ENCODE measurements at regions of chr17 and their contacts with region 1.

Region 1: DNA sequence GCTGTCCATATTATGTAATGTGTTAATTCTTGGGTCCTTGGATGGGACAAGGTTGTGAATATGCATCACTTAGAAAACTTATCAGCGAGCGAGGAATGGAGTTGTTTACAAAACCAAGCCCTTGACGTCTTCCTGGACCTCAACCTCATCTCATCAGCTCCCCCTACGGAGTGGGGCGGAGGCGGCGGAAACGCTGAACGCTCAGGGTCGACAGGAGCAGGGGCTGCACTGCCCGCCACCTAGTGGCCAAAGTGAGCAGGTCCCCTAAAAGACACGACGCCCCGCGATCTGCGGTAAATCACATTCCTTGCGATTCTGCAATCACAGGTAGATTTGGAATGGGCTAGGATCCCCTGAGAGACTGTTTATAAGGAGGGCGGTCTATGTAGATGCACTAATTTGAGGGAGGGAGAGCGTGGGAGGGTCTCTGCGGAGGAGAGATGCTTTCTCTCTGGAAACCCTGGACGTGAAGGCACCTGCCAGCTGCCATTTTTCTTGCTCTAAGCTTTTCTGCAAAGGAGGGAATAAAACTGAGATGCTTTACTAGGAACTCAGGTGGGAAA is 5.4 kb upstream of the ICAM2 start:
- DNase-seq: peak; percentile 55
- ATAC-seq: peak; percentile 90
- H3K4me3 ChIP-seq: no peak overlapping the region; the same call in 1 of the 2 replicates
- H3K27ac ChIP-seq: 0 out of 2 replicates have a peak overlapping the region, but pooled peaks have one; percentile 7
- H3K4me1 ChIP-seq: peaks cover 11% of the 10 kb centered on the region
- H3K27me3 ChIP-seq: no peaks in the 10 kb centered on the region
- CTCF ChIP-seq: peak; percentile 94 to 100 (median 97)
- EP300 ChIP-seq: no peak
- POLR2A ChIP-seq: no peak
- RAD21 ChIP-seq: peak; percentile 75

Region 2: DNA sequence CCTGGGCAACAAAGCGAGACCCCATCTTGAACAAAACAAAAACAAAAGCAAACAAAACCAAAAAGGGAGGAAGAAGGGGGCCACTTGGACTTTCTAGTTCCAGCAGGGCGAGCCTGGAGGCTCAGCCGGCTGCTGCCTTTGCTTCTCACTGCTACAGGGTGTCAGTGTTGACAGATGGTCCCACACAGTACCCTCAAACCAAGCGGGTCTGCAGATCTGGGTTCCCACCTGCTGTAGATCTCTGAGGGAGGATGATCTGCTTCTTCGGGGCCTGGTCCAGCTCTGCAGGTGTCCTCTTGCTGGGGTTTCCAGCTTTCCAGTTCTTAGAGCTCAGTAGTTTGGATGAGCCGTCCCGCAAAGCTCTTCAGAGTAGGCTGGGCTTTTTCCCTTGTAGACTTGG is 121.5 kb before region 1 on chr17:
- CTCF ChIA-PET with region 1: interaction called, 16 read pairs
- POLR2A ChIA-PET with region 1: no interaction called
- RAD21 ChIA-PET with region 1: interaction called, 8 read pairs
- SMC1A ChIA-PET with region 1: interaction called, 11 read pairs
- in situ Hi-C with region 1: no loop called
- intact Hi-C with region 1: no loop called
- DNase-seq: no peak
- ATAC-seq: no peak
- H3K4me3 ChIP-seq: no peak overlapping the region
- H3K27ac ChIP-seq: no peak overlapping the region
- H3K4me1 ChIP-seq: no peaks in the 10 kb centered on the region
- H3K27me3 ChIP-seq: no peaks in the 10 kb centered on the region
- CTCF ChIP-seq: no peak
- EP300 ChIP-seq: no peak
- POLR2A ChIP-seq: no peak
- RAD21 ChIP-seq: no peak

Region 3: GRCh38 chr17:63931099-63931561 is 94.7 kb before region 1 on chr17:
- CTCF ChIA-PET with region 1: interaction called, 10 read pairs
- POLR2A ChIA-PET with region 1: interaction called, 33 read pairs
- RAD21 ChIA-PET with region 1: interaction called, 14 read pairs
- SMC1A ChIA-PET with region 1: interaction called, 7 read pairs
- in situ Hi-C with region 1: no loop called
- intact Hi-C with region 1: no loop called
- DNase-seq: no peak
- ATAC-seq: peak; percentile 80
- H3K4me3 ChIP-seq: peak overlapping the region; percentile 98
- H3K27ac ChIP-seq: peak overlapping the region; percentile 89
- H3K4me1 ChIP-seq: peaks cover 46% of the 10 kb centered on the region
- H3K27me3 ChIP-seq: no peaks in the 10 kb centered on the region
- CTCF ChIP-seq: no peak
- EP300 ChIP-seq: no peak
- POLR2A ChIP-seq: no peak
- RAD21 ChIP-seq: no peak

Region 4: GRCh38 chr17:64041912-64042311 is 16.1 kb after region 1 on chr17:
- CTCF ChIA-PET with region 1: interaction called, 75 read pairs
- POLR2A ChIA-PET with region 1: interaction called, 6 read pairs
- RAD21 ChIA-PET with region 1: interaction called, 4 read pairs
- SMC1A ChIA-PET with region 1: interaction called, 8 read pairs
- in situ Hi-C with region 1: no loop called
- intact Hi-C with region 1: no loop called
- DNase-seq: no peak
- ATAC-seq: no peak
- H3K4me3 ChIP-seq: no peak overlapping the region
- H3K27ac ChIP-seq: no peak overlapping the region
- H3K4me1 ChIP-seq: no peaks in the 10 kb centered on the region
- H3K27me3 ChIP-seq: no peaks in the 10 kb centered on the region
- CTCF ChIP-seq: no peak
- EP300 ChIP-seq: no peak
- POLR2A ChIP-seq: no peak
- RAD21 ChIP-seq: no peak

Region 5: DNA sequence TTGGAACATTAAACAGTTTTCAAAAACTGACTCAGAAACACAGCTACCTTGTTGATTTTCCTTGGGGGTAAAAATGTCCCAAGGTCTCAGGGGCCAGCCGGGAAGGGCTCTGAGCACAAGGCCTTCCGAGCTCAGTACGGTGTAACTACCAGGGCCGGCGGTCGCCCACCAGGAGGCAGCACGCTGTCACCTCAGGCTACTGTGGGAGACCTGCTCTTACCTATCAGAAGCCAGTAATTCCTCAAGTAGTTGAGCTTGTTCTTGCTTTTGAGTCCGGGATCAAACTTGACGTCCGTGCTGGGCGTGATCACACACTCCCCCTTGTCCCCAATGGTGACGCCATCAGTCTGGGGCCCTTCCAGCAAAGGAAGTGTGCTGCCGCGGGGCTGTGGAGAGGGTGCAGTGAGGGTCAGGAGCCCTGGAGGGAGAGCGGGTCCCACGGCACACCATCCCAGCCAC is 38.0 kb after region 1 on chr17:
- CTCF ChIA-PET with region 1: interaction called, 54 read pairs
- POLR2A ChIA-PET with region 1: no interaction called
- RAD21 ChIA-PET with region 1: interaction called, 8 read pairs
- SMC1A ChIA-PET with region 1: interaction called, 25 read pairs
- in situ Hi-C with region 1: no loop called
- intact Hi-C with region 1: no loop called
- DNase-seq: no peak
- ATAC-seq: peak; percentile 51
- H3K4me3 ChIP-seq: no peak overlapping the region
- H3K27ac ChIP-seq: peak overlapping the region; percentile 54; the same call in 1 of the 2 replicates
- H3K4me1 ChIP-seq: peaks cover 37% of the 10 kb centered on the region
- H3K27me3 ChIP-seq: no peaks in the 10 kb centered on the region
- CTCF ChIP-seq: peak; percentile 40 to 49 (median 45)
- EP300 ChIP-seq: no peak
- POLR2A ChIP-seq: no peak
- RAD21 ChIP-seq: peak; percentile 63

Region 6: DNA sequence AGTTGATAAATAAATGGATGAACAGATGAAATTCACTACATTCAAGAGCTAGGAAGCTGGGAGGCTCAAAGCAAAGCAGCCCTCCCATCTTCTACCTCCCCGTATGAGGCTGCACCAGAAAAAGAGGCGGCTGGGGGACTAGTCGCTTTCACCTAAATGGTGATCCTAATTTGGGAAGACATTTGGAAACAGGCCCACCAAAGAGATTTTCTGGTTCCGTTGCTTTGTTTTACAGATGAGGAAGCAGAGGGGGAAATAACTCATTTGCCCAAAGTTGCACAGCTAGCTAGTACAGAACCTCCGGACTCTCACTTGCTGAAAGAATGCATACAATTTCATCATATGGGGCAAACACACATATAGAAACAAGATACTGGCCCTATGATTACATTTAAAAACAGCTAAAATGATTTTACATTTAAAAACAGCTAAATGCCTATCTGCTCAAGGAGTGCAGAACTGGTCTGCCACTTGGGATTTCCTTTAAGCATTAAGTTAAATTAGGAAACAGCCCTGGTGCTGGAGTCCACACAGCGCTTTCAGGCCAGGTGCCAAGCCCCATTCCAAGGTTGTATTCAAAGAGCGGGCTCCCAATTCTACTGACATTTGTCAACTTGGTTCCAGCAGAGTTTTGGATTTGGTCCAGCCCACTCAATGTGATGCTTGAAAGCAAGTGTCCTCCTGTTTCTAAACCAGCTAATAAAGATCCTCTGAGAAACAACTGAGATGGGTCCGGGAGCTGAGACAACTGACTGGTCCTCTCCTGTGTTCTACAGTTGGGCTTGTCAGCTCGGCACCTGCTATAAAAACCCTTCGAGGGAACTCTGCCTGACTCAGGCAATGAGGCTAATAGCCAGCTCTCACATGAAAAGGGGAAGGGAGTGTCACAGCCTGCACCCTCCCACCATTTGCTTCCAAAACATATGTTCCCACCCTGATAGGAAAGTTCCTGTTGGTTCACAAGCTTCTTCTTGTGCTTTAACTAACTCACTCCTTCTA is 92.5 kb after region 1 on chr17:
- CTCF ChIA-PET with region 1: interaction called, 81 read pairs
- POLR2A ChIA-PET with region 1: interaction called, 10 read pairs
- RAD21 ChIA-PET with region 1: interaction called, 19 read pairs
- SMC1A ChIA-PET with region 1: interaction called, 26 read pairs
- in situ Hi-C with region 1: no loop called
- intact Hi-C with region 1: no loop called
- DNase-seq: no peak
- ATAC-seq: no peak
- H3K4me3 ChIP-seq: no peak overlapping the region
- H3K27ac ChIP-seq: no peak overlapping the region
- H3K4me1 ChIP-seq: peaks cover 30% of the 10 kb centered on the region
- H3K27me3 ChIP-seq: no peaks in the 10 kb centered on the region
- CTCF ChIP-seq: no peak
- EP300 ChIP-seq: no peak
- POLR2A ChIP-seq: no peak
- RAD21 ChIP-seq: no peak

Region 7: DNA sequence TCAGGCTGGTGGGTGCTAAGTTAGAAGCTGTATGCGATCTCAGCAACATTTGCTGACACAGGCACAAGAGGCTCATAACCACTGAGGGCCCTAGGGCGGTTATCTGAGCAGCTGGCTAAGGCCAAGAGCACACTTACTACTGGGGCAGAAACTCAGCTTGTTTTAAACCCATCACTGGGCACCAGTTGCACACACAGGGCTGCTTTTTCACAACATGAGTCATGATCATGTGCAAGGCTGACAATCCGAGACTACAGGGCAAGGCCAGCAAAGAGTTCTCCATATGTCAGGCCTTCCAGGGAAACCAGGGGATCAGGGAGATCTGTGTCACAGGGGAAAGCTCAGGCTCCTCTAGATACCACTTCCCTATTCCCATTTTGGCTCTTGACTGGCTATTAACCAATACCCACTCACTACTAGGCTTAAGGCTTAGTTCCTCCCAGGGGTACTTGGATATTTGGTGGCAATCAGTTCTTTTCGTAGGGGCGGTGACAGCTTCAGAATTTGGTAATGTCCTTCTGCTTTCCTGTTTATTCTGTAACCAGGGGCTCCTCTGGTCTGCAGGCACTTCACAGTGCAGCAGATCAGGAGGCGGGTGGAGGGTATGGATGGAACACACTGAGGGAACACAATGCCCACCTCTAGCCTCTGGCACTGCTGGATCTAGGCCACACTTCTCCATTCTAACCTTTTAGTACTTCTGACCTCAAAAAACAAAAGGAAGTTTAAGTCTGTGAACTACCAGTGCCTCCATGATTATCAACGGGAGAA is 149.1 kb after region 1 on chr17:
- CTCF ChIA-PET with region 1: no interaction called
- POLR2A ChIA-PET with region 1: no interaction called
- RAD21 ChIA-PET with region 1: no interaction called
- SMC1A ChIA-PET with region 1: no interaction called
- in situ Hi-C with region 1: no loop called
- intact Hi-C with region 1: no loop called
- DNase-seq: no peak
- ATAC-seq: no peak
- H3K4me3 ChIP-seq: no peak overlapping the region
- H3K27ac ChIP-seq: no peak overlapping the region
- H3K4me1 ChIP-seq: no peaks in the 10 kb centered on the region
- H3K27me3 ChIP-seq: no peaks in the 10 kb centered on the region
- CTCF ChIP-seq: no peak
- EP300 ChIP-seq: no peak
- POLR2A ChIP-seq: no peak
- RAD21 ChIP-seq: no peak

Region 8: GRCh38 chr17:64281962-64282727 is 256.3 kb after region 1 on chr17:
- CTCF ChIA-PET with region 1: interaction called, 27 read pairs
- POLR2A ChIA-PET with region 1: no interaction called
- RAD21 ChIA-PET with region 1: interaction called, 8 read pairs
- SMC1A ChIA-PET with region 1: interaction called, 14 read pairs
- in situ Hi-C with region 1: loop called (anchors 25 kb)
- intact Hi-C with region 1: loop called (anchors 5 kb)
- DNase-seq: peak; percentile 17
- ATAC-seq: peak; percentile 63
- H3K4me3 ChIP-seq: no peak overlapping the region
- H3K27ac ChIP-seq: no peak overlapping the region
- H3K4me1 ChIP-seq: peaks cover 12% of the 10 kb centered on the region
- H3K27me3 ChIP-seq: no peaks in the 10 kb centered on the region; a peak in 1 of 4 replicates
- CTCF ChIP-seq: peak; percentile 70 to 74 (median 74)
- EP300 ChIP-seq: no peak
- POLR2A ChIP-seq: no peak
- RAD21 ChIP-seq: peak; percentile 97

Measured in GM12878 (cell line).